ENCODE measurements at regions of chr1 and their contacts with region 1.

Region 1: GRCh38 chr1:95233737-95234500 is at the start of gene RWDD3:
- DNase-seq: peak; percentile 82 to 97 (median 93)
- ATAC-seq: peak; percentile 94
- H3K4me3 ChIP-seq: peak within 1 kb of the TSS; percentile 85
- H3K4me3 Mint-ChIP-seq: peak within 1 kb of the TSS; percentile 95
- H3K27ac ChIP-seq: peak within 1 kb of the TSS; percentile 33 to 53
- H3K27ac Mint-ChIP-seq: peak within 1 kb of the TSS; percentile 86
- H3K4me1 ChIP-seq: peaks cover 22% of the 10 kb centered on the region
- H3K4me1 Mint-ChIP-seq: peaks cover 51% of the 10 kb centered on the region
- H3K27me3 ChIP-seq: no peaks in the 10 kb centered on the region
- H3K27me3 Mint-ChIP-seq: peaks cover 22% of the 10 kb centered on the region
- CTCF ChIP-seq: peak; percentile 78
- total RNA-seq, gene RWDD3: 14.3 to 14.5 TPM

Region 2: DNA sequence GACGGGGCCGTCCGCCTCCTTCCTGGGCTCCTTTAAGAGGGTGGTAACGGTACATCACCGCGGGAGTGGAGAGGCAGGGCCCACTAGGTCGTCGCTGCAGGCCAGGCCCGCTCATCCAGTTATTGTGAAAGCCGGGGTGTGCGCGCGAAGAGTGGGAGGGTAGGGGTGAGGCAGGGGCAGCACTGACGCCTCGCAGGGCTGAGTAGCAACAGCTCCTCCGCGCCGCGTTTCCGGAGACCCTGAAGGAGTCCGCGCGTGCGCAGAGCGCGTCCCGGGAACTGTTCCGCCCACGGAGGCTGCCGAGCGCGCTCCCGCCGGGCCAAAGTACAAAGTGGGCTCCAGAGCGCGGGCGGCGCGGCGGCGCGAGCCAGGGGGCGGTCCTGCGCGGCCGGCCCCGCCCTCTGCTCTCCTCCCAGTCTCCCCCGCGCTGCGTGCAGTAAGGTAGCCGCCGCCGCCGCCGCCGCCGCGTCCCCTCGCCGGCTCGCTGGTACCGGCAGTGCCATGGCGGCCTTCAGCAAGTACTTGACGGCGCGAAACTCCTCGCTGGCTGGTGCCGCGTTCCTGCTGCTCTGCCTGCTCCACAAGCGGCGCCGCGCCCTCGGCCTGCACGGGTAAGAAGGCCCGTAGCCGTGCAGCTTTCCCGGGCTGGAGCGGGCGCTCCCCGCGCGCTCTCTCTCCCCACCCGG is 815.8 kb before region 1 on chr1 and contains the start of gene ABCD3:
- CTCF ChIA-PET with region 1: interaction called, 4 read pairs
- POLR2A ChIA-PET with region 1: interaction called, 8 read pairs
- intact Hi-C with region 1: loop called in 1 of 2 experiments (anchors 5 kb)
- DNase-seq: peak; percentile 92 to 99 (median 97)
- ATAC-seq: peak; percentile 87
- H3K4me3 ChIP-seq: peak within 1 kb of the TSS; percentile 82
- H3K4me3 Mint-ChIP-seq: no peak within 1 kb of the TSS
- H3K27ac ChIP-seq: peak within 1 kb of the TSS; percentile 61 to 77
- H3K27ac Mint-ChIP-seq: no peak within 1 kb of the TSS
- H3K4me1 ChIP-seq: peaks cover 14% of the 10 kb centered on the region
- H3K4me1 Mint-ChIP-seq: peaks cover 41% of the 10 kb centered on the region
- H3K27me3 ChIP-seq: no peaks in the 10 kb centered on the region
- H3K27me3 Mint-ChIP-seq: no peaks in the 10 kb centered on the region
- CTCF ChIP-seq: no peak
- total RNA-seq, gene ABCD3: 13.0 to 13.5 TPM

Region 3: GRCh38 chr1:95072532-95073419 is 161.1 kb before region 1 on chr1 and contains the start of gene ALG14:
- CTCF ChIA-PET with region 1: interaction called, 26 read pairs
- POLR2A ChIA-PET with region 1: interaction called, 56 read pairs
- intact Hi-C with region 1: loop called (anchors 2 kb)
- DNase-seq: peak; percentile 87 to 97 (median 90)
- ATAC-seq: peak; percentile 90
- H3K4me3 ChIP-seq: peak within 1 kb of the TSS; percentile 77
- H3K4me3 Mint-ChIP-seq: peak within 1 kb of the TSS; percentile 98
- H3K27ac ChIP-seq: peak within 1 kb of the TSS; percentile 73 to 85
- H3K27ac Mint-ChIP-seq: peak within 1 kb of the TSS; percentile 95
- H3K4me1 ChIP-seq: peaks cover 13% of the 10 kb centered on the region
- H3K4me1 Mint-ChIP-seq: peaks cover 20% of the 10 kb centered on the region
- H3K27me3 ChIP-seq: peaks cover 0 to 6% of the 10 kb centered on the region in 2 experiments
- H3K27me3 Mint-ChIP-seq: peaks cover 4% of the 10 kb centered on the region
- CTCF ChIP-seq: no peak
- total RNA-seq, gene ALG14: 0.08 to 0.52 TPM

Region 4: GRCh38 chr1:95116580-95117206 is 117.2 kb before region 1 on chr1:
- CTCF ChIA-PET with region 1: interaction called, 7 read pairs
- POLR2A ChIA-PET with region 1: interaction called, 14 read pairs
- intact Hi-C with region 1: loop called in 1 of 2 experiments (anchors 5 kb)
- DNase-seq: peak; percentile 14 to 75 (median 42)
- ATAC-seq: peak; percentile 78
- H3K4me3 ChIP-seq: peak overlapping the region; percentile 69
- H3K4me3 Mint-ChIP-seq: peak overlapping the region; percentile 96
- H3K27ac ChIP-seq: no peak overlapping the region
- H3K27ac Mint-ChIP-seq: no peak overlapping the region
- H3K4me1 ChIP-seq: peaks cover 12% of the 10 kb centered on the region
- H3K4me1 Mint-ChIP-seq: peaks cover 4% of the 10 kb centered on the region
- H3K27me3 ChIP-seq: peaks cover 24 to 26% of the 10 kb centered on the region in 2 experiments
- H3K27me3 Mint-ChIP-seq: peaks cover 66% of the 10 kb centered on the region
- CTCF ChIP-seq: peak; percentile 76

Region 5: GRCh38 chr1:95369985-95370690 is 136.2 kb after region 1 on chr1:
- CTCF ChIA-PET with region 1: no interaction called
- POLR2A ChIA-PET with region 1: no interaction called
- intact Hi-C with region 1: no loop called
- DNase-seq: no peak
- ATAC-seq: no peak
- H3K4me3 ChIP-seq: no peak overlapping the region
- H3K4me3 Mint-ChIP-seq: no peak overlapping the region
- H3K27ac ChIP-seq: no peak overlapping the region
- H3K27ac Mint-ChIP-seq: no peak overlapping the region
- H3K4me1 ChIP-seq: no peaks in the 10 kb centered on the region
- H3K4me1 Mint-ChIP-seq: no peaks in the 10 kb centered on the region
- H3K27me3 ChIP-seq: peaks cover 0 to 2% of the 10 kb centered on the region in 2 experiments
- H3K27me3 Mint-ChIP-seq: no peaks in the 10 kb centered on the region
- CTCF ChIP-seq: no peak

Region 6: GRCh38 chr1:96721416-96722160 is 1487.7 kb after region 1 on chr1 and contains the start of gene PTBP2:
- CTCF ChIA-PET with region 1: no interaction called
- POLR2A ChIA-PET with region 1: no interaction called
- intact Hi-C with region 1: loop called in 1 of 2 experiments (anchors 5 kb)
- DNase-seq: peak; percentile 67 to 92 (median 78)
- ATAC-seq: peak; percentile 89
- H3K4me3 ChIP-seq: peak within 1 kb of the TSS; percentile 85
- H3K4me3 Mint-ChIP-seq: peak within 1 kb of the TSS; percentile 98
- H3K27ac ChIP-seq: peak within 1 kb of the TSS; percentile 86
- H3K27ac Mint-ChIP-seq: peak within 1 kb of the TSS; percentile 94
- H3K4me1 ChIP-seq: peaks cover 20% of the 10 kb centered on the region
- H3K4me1 Mint-ChIP-seq: peaks cover 33% of the 10 kb centered on the region
- H3K27me3 ChIP-seq: no peaks in the 10 kb centered on the region
- H3K27me3 Mint-ChIP-seq: no peaks in the 10 kb centered on the region
- CTCF ChIP-seq: no peak
- total RNA-seq, gene PTBP2: 32.6 to 34.3 TPM

Measured in CD4-positive, alpha-beta T cell (primary cell).